Activated CD4-positive, alpha-beta memory T cell treated with anti-CD3 and anti-CD28 coated beads for 36 hours (primary cell): ENCODE measurements at regions of chr13 and their contacts with region 1.

Region 1: GRCh38 chr13:23752111-23753001 is 136.8 kb downstream of the MIPEP start:
- DNase-seq: no peak
- H3K4me3 Mint-ChIP-seq: no peak overlapping the region
- H3K27ac Mint-ChIP-seq: no peak overlapping the region
- H3K4me1 Mint-ChIP-seq: peaks cover 45% of the 10 kb centered on the region
- H3K27me3 Mint-ChIP-seq: no peaks in the 10 kb centered on the region

Region 2: DNA sequence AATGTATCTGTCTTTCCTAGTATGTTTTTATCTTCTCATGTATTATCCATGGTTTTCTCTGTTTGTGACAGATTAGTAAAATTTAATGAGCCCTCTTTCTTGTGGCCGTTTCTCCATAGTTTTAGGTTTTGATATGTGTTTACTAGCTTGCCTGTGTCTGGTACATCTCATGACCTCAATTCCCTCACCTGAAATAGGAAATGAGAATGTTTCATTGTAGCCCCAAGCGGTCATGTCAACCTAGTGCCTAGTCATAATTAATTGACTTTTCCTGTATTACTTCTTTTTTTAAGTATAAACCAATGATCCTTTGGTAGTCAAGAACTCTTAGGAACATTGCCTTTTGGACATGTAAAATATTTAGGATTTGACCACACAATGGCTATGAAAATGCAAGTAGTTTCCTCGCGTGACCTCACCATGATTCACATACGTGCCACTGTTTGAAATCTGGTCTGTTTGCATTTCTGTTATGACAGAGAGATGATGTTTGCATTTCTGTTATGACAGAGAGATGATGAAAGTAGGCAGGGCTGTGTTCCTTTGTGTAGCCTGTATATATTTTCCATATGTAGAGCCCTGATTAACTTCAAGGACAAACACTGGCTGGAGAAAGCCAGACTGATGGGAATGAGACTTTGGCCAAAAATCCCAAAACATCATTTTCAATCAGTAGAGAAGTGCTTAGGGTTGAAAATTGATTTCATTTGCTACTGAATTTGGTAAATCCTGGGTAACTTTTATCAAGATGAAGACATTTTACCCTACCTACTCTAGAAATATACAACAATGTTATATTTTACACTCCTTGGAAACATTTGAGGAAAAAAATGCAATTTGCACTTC is 77.3 kb before region 1 on chr13:
- CTCF ChIA-PET with region 1: no interaction called
- POLR2A ChIA-PET with region 1: no interaction called
- intact Hi-C with region 1: loop called (anchors 5 kb)
- DNase-seq: peak; percentile 45
- H3K4me3 Mint-ChIP-seq: no peak overlapping the region
- H3K27ac Mint-ChIP-seq: no peak overlapping the region
- H3K4me1 Mint-ChIP-seq: peaks cover 19% of the 10 kb centered on the region
- H3K27me3 Mint-ChIP-seq: peaks cover 12% of the 10 kb centered on the region

Region 3: GRCh38 chr13:23776698-23777574 is 24.6 kb after region 1 on chr13:
- CTCF ChIA-PET with region 1: no interaction called
- POLR2A ChIA-PET with region 1: no interaction called
- intact Hi-C with region 1: loop called (anchors 2 kb)
- DNase-seq: no peak
- H3K4me3 Mint-ChIP-seq: no peak overlapping the region
- H3K27ac Mint-ChIP-seq: no peak overlapping the region
- H3K4me1 Mint-ChIP-seq: peaks cover 14% of the 10 kb centered on the region
- H3K27me3 Mint-ChIP-seq: no peaks in the 10 kb centered on the region

Region 4: GRCh38 chr13:23888658-23889614 is 136.6 kb after region 1 on chr13 and contains the start of gene MIPEP:
- CTCF ChIA-PET with region 1: no interaction called
- POLR2A ChIA-PET with region 1: no interaction called
- intact Hi-C with region 1: loop called (anchors 2 kb)
- DNase-seq: peak; percentile 95
- H3K4me3 Mint-ChIP-seq: peak within 1 kb of the TSS; percentile 82
- H3K27ac Mint-ChIP-seq: peak within 1 kb of the TSS; percentile 62
- H3K4me1 Mint-ChIP-seq: peaks cover 21% of the 10 kb centered on the region
- H3K27me3 Mint-ChIP-seq: no peaks in the 10 kb centered on the region
- total RNA-seq, gene MIPEP: 16.6 to 16.7 TPM